ENCODE measurements at regions of chr3 and their contacts with region 1.

Region 1: DNA sequence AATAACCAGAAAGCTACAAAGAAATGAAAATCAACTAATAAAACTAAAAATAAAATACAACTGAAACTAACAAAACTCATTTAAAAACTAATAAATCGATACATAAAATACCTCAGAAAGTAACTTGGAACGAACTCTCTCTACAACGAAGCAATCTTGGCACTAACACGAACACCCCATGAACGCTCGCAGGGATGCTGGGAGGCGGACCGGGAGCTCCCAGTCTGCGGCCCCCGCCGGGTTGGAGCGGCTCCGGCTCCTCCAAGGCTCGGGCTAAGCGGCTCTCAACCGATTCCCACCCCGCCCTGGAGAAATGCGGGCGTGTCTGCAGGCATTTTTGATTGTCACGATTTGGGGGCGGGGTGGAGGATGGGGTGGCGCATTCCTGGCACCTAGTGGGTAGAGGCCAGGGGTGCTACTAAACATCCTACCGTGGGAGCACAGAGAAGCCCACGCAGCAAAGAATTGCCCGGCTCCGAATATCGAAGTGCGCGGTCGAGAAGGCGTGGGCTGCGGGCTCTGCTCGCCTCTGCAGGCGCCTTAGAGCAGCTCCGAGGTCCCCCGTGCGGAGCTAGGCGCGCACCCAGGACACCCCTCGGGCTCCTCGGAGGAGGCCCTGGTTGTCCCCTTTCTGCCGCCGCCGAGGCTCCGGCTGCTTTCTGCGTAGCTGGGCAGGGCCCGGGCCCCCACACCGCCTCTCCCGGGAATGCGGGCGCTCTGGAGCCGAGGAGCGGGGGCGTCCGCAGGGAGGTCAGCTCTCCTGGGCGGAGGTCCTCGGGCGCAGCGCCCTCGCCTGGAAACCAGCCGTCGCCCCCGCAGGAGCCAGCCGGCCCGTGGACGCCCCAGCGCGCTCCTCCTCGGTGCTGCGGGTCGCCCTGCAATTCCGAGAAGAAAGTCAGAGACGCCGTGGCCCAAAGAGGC is 16.4 kb upstream of the LAMP3 start:
- DNase-seq: peak; percentile 61
- H3K4me3 Mint-ChIP-seq: peak overlapping the region; percentile 71
- H3K27ac Mint-ChIP-seq: no peak overlapping the region
- H3K4me1 Mint-ChIP-seq: peaks cover 5% of the 10 kb centered on the region
- H3K27me3 Mint-ChIP-seq: peaks cover 43% of the 10 kb centered on the region
- CTCF ChIP-seq: no peak

Region 2: GRCh38 chr3:182636646-182637045 is 542.2 kb before region 1 on chr3:
- CTCF ChIA-PET with region 1: no interaction called
- POLR2A ChIA-PET with region 1: no interaction called
- intact Hi-C with region 1: no loop called
- DNase-seq: peak; percentile 69
- H3K4me3 Mint-ChIP-seq: no peak overlapping the region
- H3K27ac Mint-ChIP-seq: peak overlapping the region; percentile 3
- H3K4me1 Mint-ChIP-seq: peaks cover 30% of the 10 kb centered on the region
- H3K27me3 Mint-ChIP-seq: no peaks in the 10 kb centered on the region
- CTCF ChIP-seq: no peak

Region 3: DNA sequence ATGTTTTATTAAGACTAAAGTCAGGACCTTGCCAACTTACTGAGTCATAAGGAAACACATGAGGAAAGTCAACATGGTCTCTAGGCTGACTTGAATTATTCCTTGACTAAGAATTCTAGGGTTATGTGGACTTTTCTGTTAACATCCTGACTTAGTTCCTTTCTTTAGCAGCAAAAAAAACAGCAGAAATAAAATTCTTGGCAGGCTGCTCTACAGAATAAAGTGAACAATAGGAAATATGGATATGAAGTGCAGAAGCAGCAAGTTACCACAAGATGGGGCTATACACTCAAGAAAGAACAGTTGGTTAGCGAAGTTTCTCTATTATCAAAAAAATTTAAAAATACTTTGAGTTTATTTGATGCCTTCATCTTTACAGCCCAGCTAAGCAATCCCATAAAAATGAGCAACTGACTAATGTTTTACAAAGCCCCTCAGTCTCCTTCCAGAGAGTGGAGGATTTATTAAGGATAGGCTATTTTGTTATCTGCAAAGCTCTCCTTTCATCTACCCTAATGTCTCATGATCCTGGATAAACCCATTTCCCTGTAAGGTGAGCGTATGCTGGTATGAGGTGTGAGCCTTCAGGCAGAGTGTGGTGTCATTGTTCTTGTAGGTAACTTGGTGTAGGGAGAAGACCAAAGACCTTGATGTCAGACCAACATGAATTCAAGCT is 56.5 kb before region 1 on chr3:
- CTCF ChIA-PET with region 1: interaction called, 69 read pairs
- POLR2A ChIA-PET with region 1: no interaction called
- intact Hi-C with region 1: loop called (anchors 1 kb)
- DNase-seq: peak; percentile 59
- H3K4me3 Mint-ChIP-seq: no peak overlapping the region
- H3K27ac Mint-ChIP-seq: no peak overlapping the region
- H3K4me1 Mint-ChIP-seq: no peaks in the 10 kb centered on the region
- H3K27me3 Mint-ChIP-seq: peaks cover 12% of the 10 kb centered on the region
- CTCF ChIP-seq: peak; percentile 57

Region 4: DNA sequence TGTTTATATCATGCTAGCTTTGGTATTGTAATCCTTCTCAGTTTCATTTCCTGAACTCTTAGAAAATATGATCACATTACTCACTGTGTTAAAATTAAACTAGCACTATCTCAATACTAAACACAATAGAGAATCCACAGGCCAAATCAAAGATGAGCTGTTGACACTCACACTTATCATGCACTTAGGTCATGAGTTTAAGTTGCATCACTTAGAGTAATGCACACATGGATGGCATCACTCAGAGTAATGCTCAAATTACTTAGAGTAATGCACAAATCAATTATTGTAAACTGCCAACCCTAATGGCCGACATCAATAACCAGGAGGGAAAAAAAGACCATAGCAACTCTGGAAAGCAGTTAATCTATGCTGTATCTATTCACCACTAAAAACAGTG is 289.5 kb after region 1 on chr3:
- CTCF ChIA-PET with region 1: no interaction called
- POLR2A ChIA-PET with region 1: no interaction called
- intact Hi-C with region 1: loop called (anchors 5 kb)
- DNase-seq: no peak
- H3K4me3 Mint-ChIP-seq: no peak overlapping the region
- H3K27ac Mint-ChIP-seq: no peak overlapping the region
- H3K4me1 Mint-ChIP-seq: no peaks in the 10 kb centered on the region
- H3K27me3 Mint-ChIP-seq: no peaks in the 10 kb centered on the region
- CTCF ChIP-seq: no peak

Measured in MCF 10A (cell line).